ENCODE measurements at regions of chrX and their contacts with region 1.

Region 1: GRCh38 chrX:115690511-115691216 is 129.7 kb downstream of the PLS3 start:
- DNase-seq: peak; percentile 37
- ATAC-seq: peak; percentile 84
- H3K4me3 ChIP-seq: no peak overlapping the region
- H3K27ac ChIP-seq: no peak overlapping the region
- H3K4me1 ChIP-seq: peaks cover 0 to 4% of the 10 kb centered on the region in 2 experiments; a peak in 2 of 4 replicates
- H3K27me3 ChIP-seq: no peaks in the 10 kb centered on the region
- CTCF ChIP-seq: peak; percentile 26 to 63 (median 58); a peak in 4 of 6 replicates
- POLR2A ChIP-seq: no peak
- RAD21 ChIP-seq: peak; percentile 59

Region 2: DNA sequence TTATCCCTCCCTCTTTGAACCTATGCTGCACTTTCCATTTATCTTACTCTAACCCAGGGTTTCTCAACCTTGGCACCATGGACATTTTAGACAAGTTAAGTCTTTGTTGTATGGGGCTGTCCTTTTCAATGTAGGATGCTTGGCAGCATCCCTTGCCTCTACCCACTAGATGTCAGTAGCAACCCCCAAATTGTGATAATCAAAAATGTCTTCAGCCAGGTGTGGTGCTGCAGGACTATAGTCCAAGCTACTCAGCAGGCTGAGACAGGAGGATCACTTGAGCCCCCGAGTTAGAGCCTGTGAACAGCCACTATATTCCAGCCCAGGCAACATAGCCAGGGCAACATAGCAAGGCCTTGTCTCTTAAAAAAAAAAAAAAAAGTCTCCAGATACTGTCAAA is 463.7 kb before region 1 on chrX:
- CTCF ChIA-PET with region 1: interaction called, 3 read pairs
- POLR2A ChIA-PET with region 1: no interaction called
- RAD21 ChIA-PET with region 1: no interaction called
- intact Hi-C with region 1: loop called (anchors 5 kb)
- DNase-seq: peak; percentile 34
- ATAC-seq: peak; percentile 99
- H3K4me3 ChIP-seq: no peak overlapping the region
- H3K27ac ChIP-seq: no peak overlapping the region
- H3K4me1 ChIP-seq: no peaks in the 10 kb centered on the region
- H3K27me3 ChIP-seq: no peaks in the 10 kb centered on the region
- CTCF ChIP-seq: peak; percentile 58 to 88 (median 59)
- POLR2A ChIP-seq: no peak
- RAD21 ChIP-seq: peak; percentile 69

Region 3: DNA sequence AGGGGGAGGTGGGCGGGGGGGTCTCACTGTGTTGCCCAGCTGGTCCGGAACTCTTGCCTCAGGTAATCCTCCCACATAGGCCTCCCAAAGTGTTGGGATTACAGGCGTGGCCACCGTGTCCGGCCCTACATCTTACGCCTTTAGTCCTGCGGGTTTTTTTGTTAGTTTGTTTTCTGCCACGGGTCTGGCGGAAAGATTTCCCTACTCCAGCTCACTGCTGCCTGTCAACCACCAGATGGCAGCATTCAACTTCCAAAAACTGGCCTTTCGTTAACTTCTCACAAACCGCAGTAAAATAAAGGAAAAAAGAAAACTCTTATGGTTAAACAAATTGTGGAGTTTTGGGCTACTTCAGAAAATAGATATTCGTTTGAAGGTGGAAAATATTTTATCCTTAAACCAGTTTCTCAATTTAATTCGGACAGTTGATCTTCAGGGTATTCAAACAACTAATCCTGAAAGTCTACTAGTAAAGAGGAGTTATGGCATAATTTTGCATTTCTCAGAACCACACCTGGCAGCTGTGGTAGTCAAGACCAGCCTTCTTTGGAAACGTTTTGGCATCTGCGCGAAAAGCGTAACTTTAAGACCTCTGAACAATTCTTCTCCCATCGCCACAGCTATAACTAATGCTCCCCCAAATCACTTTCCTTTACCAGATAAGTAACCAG is 360.0 kb before region 1 on chrX:
- CTCF ChIA-PET with region 1: interaction called, 6 read pairs
- POLR2A ChIA-PET with region 1: no interaction called
- RAD21 ChIA-PET with region 1: no interaction called
- intact Hi-C with region 1: loop called (anchors 5 kb)
- DNase-seq: peak; percentile 44
- ATAC-seq: peak; percentile 80
- H3K4me3 ChIP-seq: no peak overlapping the region
- H3K27ac ChIP-seq: no peak overlapping the region
- H3K4me1 ChIP-seq: no peaks in the 10 kb centered on the region; a peak in 1 of 4 replicates
- H3K27me3 ChIP-seq: no peaks in the 10 kb centered on the region
- CTCF ChIP-seq: peak; percentile 49 to 65 (median 62); a peak in 5 of 6 replicates
- POLR2A ChIP-seq: no peak
- RAD21 ChIP-seq: peak; percentile 80

Region 4: GRCh38 chrX:115650916-115651315 is 39.7 kb before region 1 on chrX:
- CTCF ChIA-PET with region 1: interaction called, 7 read pairs
- POLR2A ChIA-PET with region 1: no interaction called
- RAD21 ChIA-PET with region 1: interaction called in 1 of 2 experiments, 3 read pairs
- intact Hi-C with region 1: loop called (anchors 2 kb)
- DNase-seq: peak; percentile 23
- ATAC-seq: peak; percentile 85
- H3K4me3 ChIP-seq: no peak overlapping the region
- H3K27ac ChIP-seq: no peak overlapping the region
- H3K4me1 ChIP-seq: no peaks in the 10 kb centered on the region
- H3K27me3 ChIP-seq: no peaks in the 10 kb centered on the region
- CTCF ChIP-seq: peak in 2 of 3 experiments; percentile 55 to 64; a peak in 4 of 6 replicates
- POLR2A ChIP-seq: no peak
- RAD21 ChIP-seq: peak; percentile 63

Region 5: GRCh38 chrX:115968436-115969252 is 278.0 kb after region 1 on chrX:
- CTCF ChIA-PET with region 1: no interaction called
- POLR2A ChIA-PET with region 1: no interaction called
- RAD21 ChIA-PET with region 1: no interaction called
- intact Hi-C with region 1: no loop called
- DNase-seq: peak; percentile 63
- ATAC-seq: peak; percentile 95
- H3K4me3 ChIP-seq: peak overlapping the region; percentile 62 to 72
- H3K27ac ChIP-seq: peak overlapping the region; percentile 87
- H3K4me1 ChIP-seq: peaks cover 0 to 11% of the 10 kb centered on the region in 2 experiments; a peak in 1 of 4 replicates
- H3K27me3 ChIP-seq: no peaks in the 10 kb centered on the region
- CTCF ChIP-seq: no peak
- POLR2A ChIP-seq: no peak
- RAD21 ChIP-seq: no peak

Measured in HCT116 (cell line).